ENCODE measurements at regions of chr6 and their contacts with region 1.

Region 1: GRCh38 chr6:53725791-53726431 is 60.4 kb upstream of the KLHL31 start:
- DNase-seq: peak; percentile 53 to 86 (median 68)
- ATAC-seq: peak; percentile 93
- H3K4me3 ChIP-seq: no peak overlapping the region
- H3K4me3 Mint-ChIP-seq: no peak overlapping the region
- H3K27ac ChIP-seq: no peak overlapping the region
- H3K27ac Mint-ChIP-seq: no peak overlapping the region
- H3K4me1 ChIP-seq: peaks cover 9% of the 10 kb centered on the region
- H3K4me1 Mint-ChIP-seq: peaks cover 5% of the 10 kb centered on the region
- H3K27me3 ChIP-seq: no peaks in the 10 kb centered on the region
- H3K27me3 Mint-ChIP-seq: peaks cover 13% of the 10 kb centered on the region
- CTCF ChIP-seq: peak; percentile 93

Region 2: GRCh38 chr6:52976591-52977035 is 749.3 kb before region 1 on chr6:
- CTCF ChIA-PET with region 1: no interaction called
- POLR2A ChIA-PET with region 1: no interaction called
- intact Hi-C with region 1: no loop called
- DNase-seq: no peak
- ATAC-seq: no peak
- H3K4me3 ChIP-seq: no peak overlapping the region
- H3K4me3 Mint-ChIP-seq: no peak overlapping the region
- H3K27ac ChIP-seq: no peak overlapping the region
- H3K27ac Mint-ChIP-seq: no peak overlapping the region
- H3K4me1 ChIP-seq: no peaks in the 10 kb centered on the region
- H3K4me1 Mint-ChIP-seq: no peaks in the 10 kb centered on the region
- H3K27me3 ChIP-seq: no peaks in the 10 kb centered on the region
- H3K27me3 Mint-ChIP-seq: peaks cover 26% of the 10 kb centered on the region
- CTCF ChIP-seq: no peak

Region 3: DNA sequence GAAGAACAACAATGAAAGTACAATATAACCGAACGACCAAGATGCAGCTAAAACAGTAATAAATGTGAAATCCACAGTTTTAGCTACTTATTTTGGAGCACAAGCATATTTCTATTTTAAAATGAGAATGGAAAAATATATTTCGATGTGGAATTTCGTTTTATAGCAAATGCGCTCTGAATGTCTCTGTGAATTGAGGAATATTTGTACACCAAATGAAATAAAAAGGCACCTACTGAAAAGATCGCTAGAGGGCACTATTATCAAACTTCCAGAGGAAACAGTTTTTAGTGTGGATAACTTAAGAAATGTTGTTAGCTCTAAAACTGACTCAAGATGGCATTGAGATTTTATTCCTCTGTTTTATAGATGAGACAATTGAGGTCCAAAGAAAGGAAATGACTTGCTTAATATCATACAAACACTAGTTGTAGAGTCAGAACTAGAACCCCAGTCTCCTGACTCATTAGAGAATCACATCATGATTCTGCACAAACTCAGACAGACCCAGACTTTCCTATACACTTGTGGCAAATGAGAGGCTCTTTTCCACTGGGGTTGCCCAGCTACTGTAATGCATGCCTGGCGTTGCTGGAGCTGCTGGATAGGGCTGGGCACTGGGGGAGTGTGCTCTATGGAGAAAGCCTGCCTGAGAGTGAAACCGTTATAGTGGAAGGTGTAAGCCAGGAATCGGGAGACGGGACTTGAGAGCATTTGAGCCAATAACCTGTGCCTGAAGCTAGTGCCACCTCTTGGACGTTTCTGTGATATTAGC is 232.9 kb before region 1 on chr6:
- CTCF ChIA-PET with region 1: interaction called, 7 read pairs
- POLR2A ChIA-PET with region 1: interaction called, 6 read pairs
- intact Hi-C with region 1: loop called (anchors 1 kb)
- DNase-seq: peak in 3 of 14 experiments; percentile 63 to 68 (median 66)
- ATAC-seq: peak; percentile 46
- H3K4me3 ChIP-seq: no peak overlapping the region
- H3K4me3 Mint-ChIP-seq: no peak overlapping the region
- H3K27ac ChIP-seq: no peak overlapping the region
- H3K27ac Mint-ChIP-seq: no peak overlapping the region
- H3K4me1 ChIP-seq: peaks cover 3% of the 10 kb centered on the region
- H3K4me1 Mint-ChIP-seq: no peaks in the 10 kb centered on the region
- H3K27me3 ChIP-seq: no peaks in the 10 kb centered on the region
- H3K27me3 Mint-ChIP-seq: peaks cover 18% of the 10 kb centered on the region
- CTCF ChIP-seq: peak; percentile 87

Region 4: GRCh38 chr6:53658992-53659391 is 66.9 kb before region 1 on chr6:
- CTCF ChIA-PET with region 1: no interaction called
- POLR2A ChIA-PET with region 1: no interaction called
- intact Hi-C with region 1: loop called in 1 of 2 experiments (anchors 5 kb)
- DNase-seq: no peak
- ATAC-seq: no peak
- H3K4me3 ChIP-seq: no peak overlapping the region
- H3K4me3 Mint-ChIP-seq: no peak overlapping the region
- H3K27ac ChIP-seq: no peak overlapping the region
- H3K27ac Mint-ChIP-seq: no peak overlapping the region
- H3K4me1 ChIP-seq: no peaks in the 10 kb centered on the region
- H3K4me1 Mint-ChIP-seq: no peaks in the 10 kb centered on the region
- H3K27me3 ChIP-seq: no peaks in the 10 kb centered on the region
- H3K27me3 Mint-ChIP-seq: peaks cover 10% of the 10 kb centered on the region
- CTCF ChIP-seq: no peak

Region 5: GRCh38 chr6:53679446-53679933 is 46.4 kb before region 1 on chr6:
- CTCF ChIA-PET with region 1: no interaction called
- POLR2A ChIA-PET with region 1: no interaction called
- intact Hi-C with region 1: no loop called
- DNase-seq: peak in 3 of 14 experiments; percentile 44 to 59 (median 45)
- ATAC-seq: peak; percentile 43
- H3K4me3 ChIP-seq: no peak overlapping the region
- H3K4me3 Mint-ChIP-seq: no peak overlapping the region
- H3K27ac ChIP-seq: no peak overlapping the region
- H3K27ac Mint-ChIP-seq: no peak overlapping the region
- H3K4me1 ChIP-seq: no peaks in the 10 kb centered on the region
- H3K4me1 Mint-ChIP-seq: no peaks in the 10 kb centered on the region
- H3K27me3 ChIP-seq: no peaks in the 10 kb centered on the region
- H3K27me3 Mint-ChIP-seq: no peaks in the 10 kb centered on the region
- CTCF ChIP-seq: no peak

Region 6: DNA sequence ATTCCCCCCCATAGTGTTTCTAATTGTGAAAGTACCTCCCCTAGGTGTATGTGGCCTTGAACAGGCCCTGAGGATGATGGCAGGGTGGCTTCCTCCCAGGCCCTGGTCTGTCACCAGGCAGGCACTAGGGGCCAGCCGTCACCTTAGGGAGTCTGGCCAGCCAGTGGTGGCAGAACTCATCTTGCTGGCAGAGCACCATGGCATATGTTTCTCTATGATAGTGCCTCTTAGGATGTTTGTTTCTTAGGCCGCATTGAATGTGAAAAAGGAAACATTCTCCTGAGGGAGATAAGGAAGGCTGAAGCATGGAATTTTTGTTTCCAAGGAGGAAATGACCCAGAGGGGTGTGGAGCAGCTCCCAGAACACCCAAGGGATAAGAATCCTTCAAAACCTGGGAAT is 15.1 kb before region 1 on chr6:
- CTCF ChIA-PET with region 1: interaction called, 13 read pairs
- POLR2A ChIA-PET with region 1: interaction called, 3 read pairs
- intact Hi-C with region 1: no loop called
- DNase-seq: no peak
- ATAC-seq: no peak
- H3K4me3 ChIP-seq: no peak overlapping the region
- H3K4me3 Mint-ChIP-seq: no peak overlapping the region
- H3K27ac ChIP-seq: no peak overlapping the region
- H3K27ac Mint-ChIP-seq: no peak overlapping the region
- H3K4me1 ChIP-seq: no peaks in the 10 kb centered on the region
- H3K4me1 Mint-ChIP-seq: no peaks in the 10 kb centered on the region
- H3K27me3 ChIP-seq: peaks cover 3 to 8% of the 10 kb centered on the region in 2 experiments
- H3K27me3 Mint-ChIP-seq: peaks cover 33% of the 10 kb centered on the region
- CTCF ChIP-seq: no peak

Region 7: GRCh38 chr6:53771785-53772624 is 46.1 kb after region 1 on chr6:
- CTCF ChIA-PET with region 1: no interaction called
- POLR2A ChIA-PET with region 1: no interaction called
- intact Hi-C with region 1: no loop called
- DNase-seq: no peak
- ATAC-seq: no peak
- H3K4me3 ChIP-seq: no peak overlapping the region
- H3K4me3 Mint-ChIP-seq: no peak overlapping the region
- H3K27ac ChIP-seq: no peak overlapping the region
- H3K27ac Mint-ChIP-seq: no peak overlapping the region
- H3K4me1 ChIP-seq: no peaks in the 10 kb centered on the region
- H3K4me1 Mint-ChIP-seq: no peaks in the 10 kb centered on the region
- H3K27me3 ChIP-seq: peaks cover 0 to 1% of the 10 kb centered on the region in 2 experiments
- H3K27me3 Mint-ChIP-seq: peaks cover 4% of the 10 kb centered on the region
- CTCF ChIP-seq: no peak

Region 8: GRCh38 chr6:53998303-53998702 is 272.4 kb after region 1 on chr6:
- CTCF ChIA-PET with region 1: no interaction called
- POLR2A ChIA-PET with region 1: no interaction called
- intact Hi-C with region 1: no loop called
- DNase-seq: no peak
- ATAC-seq: no peak
- H3K4me3 ChIP-seq: no peak overlapping the region
- H3K4me3 Mint-ChIP-seq: no peak overlapping the region
- H3K27ac ChIP-seq: no peak overlapping the region
- H3K27ac Mint-ChIP-seq: no peak overlapping the region
- H3K4me1 ChIP-seq: no peaks in the 10 kb centered on the region
- H3K4me1 Mint-ChIP-seq: peaks cover 6% of the 10 kb centered on the region
- H3K27me3 ChIP-seq: no peaks in the 10 kb centered on the region
- H3K27me3 Mint-ChIP-seq: peaks cover 31% of the 10 kb centered on the region
- CTCF ChIP-seq: no peak